Activated T-helper 1 cell treated with anti-CD3 and anti-CD28 coated beads, Interleukin-12 subunit alpha, Interleukin-12 subunit beta, Interleukin-2, Interleukin-4 antibody, amounts not matched to agents 30 ng/mL and 10 ng/mL and 1 ng/mL, durations not matched to agents 14 hours and 24 hours and 36 hours (primary cell): ENCODE measurements at regions of chr15 and their contacts with region 1.

Region 1: GRCh38 chr15:36039996-36040572 is 494.1 kb upstream of the DPH6 start:
- DNase-seq: no peak
- H3K4me3 Mint-ChIP-seq: no peak overlapping the region
- H3K27ac Mint-ChIP-seq: no peak overlapping the region
- H3K4me1 Mint-ChIP-seq: no peaks in the 10 kb centered on the region
- H3K27me3 Mint-ChIP-seq: no peaks in the 10 kb centered on the region

Region 2: DNA sequence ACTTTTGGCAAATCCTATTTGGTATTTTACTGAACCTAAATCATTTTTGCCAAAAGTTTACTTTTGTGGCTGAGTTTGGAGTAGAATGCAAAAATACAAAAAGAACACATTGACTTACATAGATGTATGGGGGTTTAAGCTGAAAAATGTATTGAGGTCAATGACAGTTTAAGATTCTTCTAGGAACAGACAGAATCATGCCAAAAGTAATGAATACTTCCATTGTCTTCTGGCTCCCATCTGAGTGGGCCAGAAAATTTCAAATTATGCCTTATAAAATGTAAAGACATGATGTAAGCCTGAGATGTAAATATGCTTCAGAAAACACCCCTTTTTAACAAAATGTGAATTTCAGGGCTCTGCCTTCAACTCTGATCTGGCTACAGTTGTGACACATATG is 119.0 kb before region 1 on chr15:
- intact Hi-C with region 1: no loop called
- DNase-seq: no peak
- H3K4me3 Mint-ChIP-seq: no peak overlapping the region
- H3K27ac Mint-ChIP-seq: no peak overlapping the region
- H3K4me1 Mint-ChIP-seq: no peaks in the 10 kb centered on the region
- H3K27me3 Mint-ChIP-seq: no peaks in the 10 kb centered on the region

Region 3: GRCh38 chr15:36026627-36027026 is 13.5 kb before region 1 on chr15:
- intact Hi-C with region 1: loop called (anchors 2 kb)
- DNase-seq: no peak
- H3K4me3 Mint-ChIP-seq: no peak overlapping the region
- H3K27ac Mint-ChIP-seq: no peak overlapping the region
- H3K4me1 Mint-ChIP-seq: no peaks in the 10 kb centered on the region
- H3K27me3 Mint-ChIP-seq: no peaks in the 10 kb centered on the region

Region 4: DNA sequence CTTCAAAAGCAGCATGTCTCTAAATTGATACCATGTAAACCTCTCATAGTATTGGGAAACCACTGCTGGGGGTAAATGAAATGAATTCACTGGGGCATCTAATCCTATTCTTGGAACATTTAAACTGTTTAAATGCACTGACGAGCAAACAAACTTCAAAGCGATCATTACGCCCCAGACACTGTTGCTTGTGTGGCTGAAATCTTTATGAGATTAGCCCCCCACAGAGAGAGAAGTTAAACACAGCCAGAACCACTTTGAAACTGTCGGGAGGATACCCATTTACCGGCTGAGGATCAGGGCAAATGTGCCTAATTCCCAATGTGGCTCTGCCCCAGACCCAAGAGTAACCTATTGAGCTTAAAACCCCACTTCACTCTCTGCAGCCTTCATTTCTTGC is 231.0 kb after region 1 on chr15:
- intact Hi-C with region 1: no loop called
- DNase-seq: no peak
- H3K4me3 Mint-ChIP-seq: no peak overlapping the region
- H3K27ac Mint-ChIP-seq: no peak overlapping the region
- H3K4me1 Mint-ChIP-seq: no peaks in the 10 kb centered on the region
- H3K27me3 Mint-ChIP-seq: no peaks in the 10 kb centered on the region